ENCODE measurements at regions of chr1 and their contacts with region 1.

Region 1: DNA sequence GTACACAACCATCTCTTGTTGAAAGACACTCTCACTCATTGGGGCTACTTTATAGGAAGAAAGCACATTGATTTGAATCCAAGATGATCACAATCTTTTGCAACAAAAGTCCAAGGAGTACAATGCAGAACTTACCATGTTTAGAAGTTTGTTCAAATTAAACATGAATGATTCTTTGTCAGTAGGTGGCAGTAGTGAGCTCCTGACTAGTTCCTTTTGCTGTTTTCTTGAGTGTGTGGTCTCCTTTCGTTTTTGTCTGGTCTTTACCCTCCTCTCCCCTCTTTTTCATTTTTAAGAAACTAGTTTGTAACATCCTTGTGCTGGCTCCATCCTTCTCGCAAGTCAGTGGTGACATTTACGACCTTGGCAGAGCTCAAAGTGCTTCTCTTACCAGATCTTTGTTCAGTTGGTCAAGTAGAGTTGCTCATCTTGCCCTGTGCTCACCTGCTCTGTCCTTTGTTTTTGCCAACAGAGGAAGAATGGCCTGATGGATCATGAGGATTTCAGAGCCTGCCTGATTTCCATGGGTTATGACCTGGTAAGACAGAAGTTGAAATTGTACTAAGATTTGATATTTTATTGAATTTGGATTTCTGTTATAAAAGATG is 35.7 kb upstream of the MTR start:
- DNase-seq: no peak
- H3K4me3 ChIP-seq: no peak overlapping the region
- H3K27ac ChIP-seq: no peak overlapping the region
- H3K4me1 ChIP-seq: no peaks in the 10 kb centered on the region
- H3K27me3 ChIP-seq: no peaks in the 10 kb centered on the region
- CTCF ChIP-seq: peak; percentile 50 to 75 (median 62)
- EP300 ChIP-seq: no peak
- POLR2A ChIP-seq: no peak

Region 2: DNA sequence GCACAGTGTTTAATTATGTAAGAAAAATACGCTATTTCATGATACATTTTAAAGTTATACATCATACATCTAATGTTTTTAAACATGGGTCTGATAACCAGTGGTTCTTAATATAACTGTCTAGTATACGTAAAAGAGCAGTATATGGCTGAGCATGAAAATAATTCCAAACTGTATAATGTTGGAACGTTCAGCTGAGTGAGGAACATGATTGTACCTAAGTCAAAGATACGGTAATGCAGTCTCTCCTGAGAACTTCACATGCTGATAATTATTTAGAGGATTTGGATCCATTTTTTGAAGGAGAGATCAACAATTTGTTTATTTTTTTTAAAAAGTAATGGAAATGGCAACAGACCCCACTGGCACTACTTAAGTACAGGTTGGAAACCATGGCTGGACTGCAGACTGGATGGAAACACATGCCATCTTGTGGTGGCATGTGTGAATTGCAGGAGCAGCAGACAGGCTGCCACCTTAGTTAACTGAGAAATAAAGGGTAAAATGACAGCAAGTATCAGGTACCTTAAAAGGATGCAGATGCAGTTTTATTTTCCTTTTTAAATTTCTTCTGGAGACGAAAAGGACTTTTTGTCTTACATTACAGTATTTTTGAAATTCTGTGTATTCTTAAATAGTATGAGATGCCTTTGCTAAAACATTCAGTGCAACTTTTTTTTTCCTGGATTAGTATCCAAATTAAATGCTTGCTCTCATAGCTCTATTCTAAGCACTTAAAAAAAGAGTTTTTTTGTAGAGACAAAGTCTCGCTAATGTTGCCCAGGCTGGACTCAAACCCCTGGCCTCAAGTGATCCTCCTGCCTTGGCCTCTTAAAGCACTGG is 109.5 kb after region 1 on chr1:
- in situ Hi-C with region 1: loop called in 1 of 4 experiments (anchors 10 kb)
- intact Hi-C with region 1: no loop called
- DNase-seq: peak; percentile 33
- H3K4me3 ChIP-seq: no peak overlapping the region
- H3K27ac ChIP-seq: no peak overlapping the region
- H3K4me1 ChIP-seq: no peaks in the 10 kb centered on the region
- H3K27me3 ChIP-seq: no peaks in the 10 kb centered on the region
- CTCF ChIP-seq: peak; percentile 80 to 97 (median 88)
- EP300 ChIP-seq: no peak
- POLR2A ChIP-seq: no peak

Region 3: DNA sequence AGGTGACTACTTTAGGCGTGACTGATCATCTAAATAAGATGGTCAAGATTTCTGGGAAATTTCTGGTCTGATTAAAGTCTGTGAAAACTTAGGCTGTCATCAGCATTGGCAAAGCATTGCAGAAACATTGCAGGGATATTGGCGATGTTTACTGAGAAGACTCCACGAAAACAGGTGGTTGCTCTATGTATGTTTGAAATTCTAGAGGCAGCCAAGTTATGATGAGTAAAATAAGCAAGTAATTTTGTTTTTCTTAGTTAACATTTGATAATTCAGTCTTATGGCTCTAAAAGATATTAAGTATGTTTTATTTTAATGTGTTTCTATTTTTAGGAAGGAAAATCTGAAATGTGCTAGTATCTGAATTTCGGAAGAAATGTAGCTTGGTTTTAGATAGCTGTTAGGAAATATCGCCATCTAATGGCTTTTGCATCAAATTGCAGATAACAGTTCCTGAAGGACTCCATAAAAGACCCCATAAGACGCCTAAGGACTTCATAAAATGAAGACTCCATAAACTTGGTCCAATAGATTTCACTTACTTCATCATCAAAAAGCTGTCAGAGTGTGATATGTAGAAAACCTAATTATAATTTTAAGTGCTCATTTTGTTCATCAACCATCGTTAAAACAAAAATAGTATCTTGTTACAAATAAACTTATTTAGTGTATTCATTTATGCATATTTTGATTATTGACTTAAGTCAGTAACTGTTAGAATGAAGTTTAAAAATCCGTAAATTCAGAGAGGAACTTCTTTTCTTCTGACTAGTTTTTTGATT is 627.2 kb after region 1 on chr1:
- in situ Hi-C with region 1: loop called in 3 of 4 experiments (anchors 25 kb)
- intact Hi-C with region 1: no loop called
- DNase-seq: no peak
- H3K4me3 ChIP-seq: no peak overlapping the region
- H3K27ac ChIP-seq: no peak overlapping the region
- H3K4me1 ChIP-seq: peaks cover 0 to 12% (median 0%) of the 10 kb centered on the region in 4 donors
- H3K27me3 ChIP-seq: no peaks in the 10 kb centered on the region
- CTCF ChIP-seq: peak; percentile 38 to 65 (median 54)
- EP300 ChIP-seq: no peak
- POLR2A ChIP-seq: no peak

Region 4: DNA sequence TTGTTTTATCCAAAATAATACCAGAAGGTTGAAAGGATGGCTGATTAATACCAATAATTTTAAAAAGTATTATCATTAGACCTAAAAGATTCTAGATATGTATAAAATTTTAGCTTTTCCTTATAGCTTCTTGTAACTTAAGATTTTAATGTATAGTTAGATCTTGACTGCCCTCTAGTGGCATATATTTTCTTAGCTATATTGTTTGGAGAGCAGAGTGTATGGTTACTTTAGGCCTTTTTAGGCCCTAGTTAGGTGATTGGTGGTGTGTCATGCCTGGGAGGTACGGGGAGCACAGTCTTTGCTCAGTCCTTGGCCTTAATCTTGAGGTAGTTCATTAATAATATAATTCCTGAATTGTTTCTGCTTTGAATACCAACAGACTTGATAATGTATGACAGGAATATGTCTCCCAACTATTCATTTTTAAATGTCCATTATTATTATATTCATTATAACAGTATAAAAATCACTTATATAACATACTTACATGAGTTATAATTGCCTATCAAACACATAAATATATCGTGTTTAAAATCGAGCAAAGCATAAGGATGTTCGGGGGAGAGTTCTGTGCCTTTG is 803.0 kb after region 1 on chr1:
- in situ Hi-C with region 1: loop called in 1 of 4 experiments (anchors 25 kb)
- intact Hi-C with region 1: loop called (anchors 10 kb)
- DNase-seq: no peak
- H3K4me3 ChIP-seq: no peak overlapping the region
- H3K27ac ChIP-seq: no peak overlapping the region
- H3K4me1 ChIP-seq: no peaks in the 10 kb centered on the region
- H3K27me3 ChIP-seq: no peaks in the 10 kb centered on the region
- CTCF ChIP-seq: peak; percentile 46 to 66 (median 51)
- EP300 ChIP-seq: no peak
- POLR2A ChIP-seq: no peak

Measured in transverse colon (tissue), 4 donors.